ENCODE measurements at regions of chr11 and their contacts with region 1.

Region 1: GRCh38 chr11:93197380-93198214 is at the start of gene SLC36A4:
- DNase-seq: peak; percentile 80
- H3K4me3 Mint-ChIP-seq: peak within 1 kb of the TSS; percentile 97
- H3K27ac Mint-ChIP-seq: peak within 1 kb of the TSS; percentile 97
- H3K4me1 Mint-ChIP-seq: peaks cover 13% of the 10 kb centered on the region
- H3K27me3 Mint-ChIP-seq: peaks cover 13% of the 10 kb centered on the region
- total RNA-seq, gene SLC36A4: 16.9 and 17.1 TPM in 2 replicates

Region 2: GRCh38 chr11:93017821-93018690 is 179.5 kb before region 1 on chr11:
- intact Hi-C with region 1: no loop called
- DNase-seq: no peak
- H3K4me3 Mint-ChIP-seq: no peak overlapping the region
- H3K27ac Mint-ChIP-seq: no peak overlapping the region
- H3K4me1 Mint-ChIP-seq: peaks cover 5% of the 10 kb centered on the region
- H3K27me3 Mint-ChIP-seq: peaks cover 6% of the 10 kb centered on the region

Region 3: DNA sequence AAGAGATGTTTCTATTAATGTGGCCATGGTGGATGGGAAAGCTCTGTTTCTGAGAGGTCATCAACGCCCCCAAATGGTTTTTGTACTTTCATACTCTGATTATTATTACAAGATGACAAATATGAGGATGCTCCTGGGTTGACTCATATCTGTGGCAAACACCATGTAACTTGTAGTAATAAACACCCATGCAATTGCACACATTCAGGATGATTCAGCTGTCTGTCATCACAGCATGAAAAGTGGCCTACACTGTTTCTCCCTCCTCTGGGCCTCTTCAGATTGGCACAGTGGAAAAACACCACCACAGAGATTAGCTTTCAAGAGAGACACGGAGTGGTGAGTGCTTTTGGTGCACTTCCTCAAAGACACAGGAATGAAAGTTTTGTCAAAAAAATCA is 142.7 kb before region 1 on chr11:
- intact Hi-C with region 1: loop called (anchors 1 kb)
- DNase-seq: no peak
- H3K4me3 Mint-ChIP-seq: no peak overlapping the region
- H3K27ac Mint-ChIP-seq: peak overlapping the region; percentile 71
- H3K4me1 Mint-ChIP-seq: peaks cover 11% of the 10 kb centered on the region
- H3K27me3 Mint-ChIP-seq: no peaks in the 10 kb centered on the region

Region 4: DNA sequence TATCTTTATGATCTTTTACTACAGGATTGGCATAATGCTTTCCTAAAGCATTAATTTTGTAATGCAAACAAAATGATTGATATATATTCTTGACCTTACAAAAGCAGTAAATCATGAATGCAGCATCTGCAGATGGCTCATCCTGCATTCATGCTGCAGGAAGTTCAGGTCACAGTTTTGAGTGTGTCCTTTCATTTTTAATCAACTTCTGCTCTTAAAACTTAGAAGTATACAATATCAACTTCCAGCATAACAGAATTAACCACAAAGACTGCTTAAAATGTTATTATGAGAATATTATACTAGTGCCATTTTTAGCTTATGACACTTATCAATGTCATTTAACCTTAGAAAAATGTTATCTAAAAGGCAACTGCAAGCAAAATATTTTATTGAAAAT is 53.8 kb before region 1 on chr11:
- intact Hi-C with region 1: no loop called
- DNase-seq: no peak
- H3K4me3 Mint-ChIP-seq: no peak overlapping the region
- H3K27ac Mint-ChIP-seq: no peak overlapping the region
- H3K4me1 Mint-ChIP-seq: peaks cover 8% of the 10 kb centered on the region
- H3K27me3 Mint-ChIP-seq: no peaks in the 10 kb centered on the region

Region 5: GRCh38 chr11:93639548-93639947 is 442.0 kb after region 1 on chr11:
- intact Hi-C with region 1: no loop called
- DNase-seq: no peak
- H3K4me3 Mint-ChIP-seq: no peak overlapping the region
- H3K27ac Mint-ChIP-seq: no peak overlapping the region
- H3K4me1 Mint-ChIP-seq: no peaks in the 10 kb centered on the region
- H3K27me3 Mint-ChIP-seq: peaks cover 15% of the 10 kb centered on the region

Region 6: GRCh38 chr11:93662177-93662575 is 464.6 kb after region 1 on chr11:
- intact Hi-C with region 1: loop called (anchors 1 kb)
- DNase-seq: no peak
- H3K4me3 Mint-ChIP-seq: peak overlapping the region; percentile 89
- H3K27ac Mint-ChIP-seq: peak overlapping the region; percentile 86
- H3K4me1 Mint-ChIP-seq: peaks cover 47% of the 10 kb centered on the region
- H3K27me3 Mint-ChIP-seq: no peaks in the 10 kb centered on the region

Region 7: GRCh38 chr11:93784152-93784934 is 586.7 kb after region 1 on chr11 and contains the start of gene MED17:
- intact Hi-C with region 1: loop called (anchors 1 kb)
- DNase-seq: peak; percentile 87
- H3K4me3 Mint-ChIP-seq: peak within 1 kb of the TSS; percentile 93
- H3K27ac Mint-ChIP-seq: peak within 1 kb of the TSS; percentile 88
- H3K4me1 Mint-ChIP-seq: peaks cover 45% of the 10 kb centered on the region
- H3K27me3 Mint-ChIP-seq: no peaks in the 10 kb centered on the region
- total RNA-seq, gene MED17: 55.8 and 59.4 TPM in 2 replicates